Thyroid gland (tissue), 4 donors: ENCODE measurements at regions of chr12 and their contacts with region 1.

Region 1: DNA sequence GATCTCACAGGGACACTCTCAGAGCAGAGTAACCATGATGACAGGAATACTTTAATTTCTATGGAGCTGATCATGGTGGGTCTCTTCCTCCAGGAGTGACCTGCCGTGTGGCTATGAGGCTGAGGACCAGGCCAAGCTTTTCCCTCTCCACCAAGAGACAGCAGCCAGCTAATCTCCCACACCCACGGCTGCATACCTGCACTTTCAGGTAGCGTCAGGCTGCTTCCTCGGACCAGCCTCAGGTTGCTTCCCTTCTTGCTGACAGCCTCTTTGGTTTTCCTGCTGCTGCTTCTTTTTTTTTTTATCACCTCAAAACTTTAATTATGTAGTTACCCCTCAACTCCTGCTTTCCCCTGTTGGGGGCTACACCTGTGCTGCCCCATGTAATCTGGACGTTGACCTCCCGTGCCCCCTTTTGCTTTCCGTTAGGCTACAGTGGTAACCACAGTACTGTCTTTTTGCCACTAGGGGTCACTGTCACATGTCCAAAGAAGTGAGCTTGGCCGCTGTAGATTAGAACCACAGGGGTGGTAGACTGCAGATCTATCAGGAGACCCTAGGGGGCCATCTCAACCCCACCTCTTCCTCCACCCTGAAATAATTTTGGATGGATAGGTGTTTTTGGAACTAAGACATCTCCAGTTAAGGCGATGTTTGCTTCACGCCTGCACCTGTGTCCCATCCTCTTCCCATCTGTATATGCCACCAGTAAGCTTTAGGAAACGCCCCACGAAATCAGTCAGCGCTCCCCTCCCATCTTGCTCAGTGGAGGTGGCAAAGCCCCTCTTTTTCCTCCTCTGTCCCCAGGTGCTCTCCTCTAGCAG is 7.8 kb upstream of the PIP4K2C start:
- DNase-seq: peak; percentile 58 to 60
- H3K4me3 ChIP-seq: no peak overlapping the region
- H3K27ac ChIP-seq: no peak overlapping the region
- H3K4me1 ChIP-seq: no peaks in the 10 kb centered on the region
- H3K27me3 ChIP-seq: no peaks in the 10 kb centered on the region
- CTCF ChIP-seq: peak; percentile 78 to 96 (median 93)
- POLR2A ChIP-seq: no peak

Region 2: DNA sequence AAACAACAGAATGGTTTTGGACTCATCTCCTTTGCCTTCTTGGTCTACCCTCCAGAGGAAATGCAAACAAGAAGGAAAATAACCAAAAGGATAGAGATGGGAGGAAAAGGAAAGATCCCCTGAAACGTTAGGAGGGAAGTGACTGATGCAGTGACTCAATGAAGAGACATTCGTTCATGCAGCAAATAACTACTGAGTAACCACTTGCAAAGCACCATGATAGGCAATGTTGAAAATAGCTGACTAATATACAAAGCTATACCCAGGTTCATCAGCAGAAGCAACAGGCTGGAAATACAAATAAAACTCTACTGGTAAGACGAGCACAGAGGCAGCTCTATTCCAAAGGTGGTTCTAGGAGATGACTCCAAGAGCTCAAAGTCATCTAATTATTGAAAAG is 194.2 kb before region 1 on chr12:
- intact Hi-C with region 1: no loop called
- DNase-seq: no peak
- H3K4me3 ChIP-seq: no peak overlapping the region
- H3K27ac ChIP-seq: no peak overlapping the region
- H3K4me1 ChIP-seq: peaks cover 3 to 7% of the 10 kb centered on the region in 2 donors
- H3K27me3 ChIP-seq: no peaks in the 10 kb centered on the region
- CTCF ChIP-seq: no peak
- POLR2A ChIP-seq: no peak

Region 3: DNA sequence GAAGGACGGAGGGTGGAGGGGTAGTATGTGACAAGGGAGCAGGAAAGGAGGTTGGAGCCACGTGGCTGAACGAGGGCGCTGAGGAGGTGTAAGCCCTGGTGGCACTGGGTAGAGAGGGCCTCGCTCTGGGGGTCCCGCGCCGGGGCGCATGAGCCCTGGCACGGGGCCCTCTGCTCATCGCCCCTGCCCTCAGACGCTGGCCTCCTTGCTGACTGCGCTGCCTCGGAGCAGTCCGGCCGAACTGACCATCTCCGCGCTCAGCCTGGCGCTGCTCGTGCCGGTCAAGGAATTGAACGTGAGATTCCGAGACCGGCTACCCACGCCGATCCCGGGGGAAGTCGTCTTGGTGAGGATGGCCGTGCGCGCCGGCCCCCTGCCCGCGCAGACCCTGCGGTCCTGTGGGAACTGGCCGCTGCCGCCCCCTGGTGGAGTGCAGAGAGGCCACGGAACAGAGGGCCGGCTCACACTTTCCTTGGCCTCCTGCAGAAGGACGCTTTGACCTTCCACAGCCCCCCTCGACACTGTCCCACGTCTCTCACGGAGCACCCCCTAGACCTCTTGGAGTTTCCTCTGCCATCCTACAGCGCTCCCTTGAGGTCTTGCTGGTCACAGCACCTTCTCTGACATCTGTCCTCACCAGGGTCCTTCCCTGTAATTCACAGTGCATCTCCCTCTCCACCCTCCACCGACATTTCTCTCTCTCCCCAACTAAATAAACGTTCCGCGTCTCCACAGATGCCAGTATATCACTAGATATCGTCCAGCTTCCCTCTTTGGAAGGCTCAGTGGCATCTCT is 38.5 kb after region 1 on chr12:
- intact Hi-C with region 1: loop called (anchors 5 kb)
- DNase-seq: peak; percentile 59
- H3K4me3 ChIP-seq: peak overlapping the region in 1 of 3 donors; percentile 1
- H3K27ac ChIP-seq: no peak overlapping the region
- H3K4me1 ChIP-seq: peaks cover 6 to 20% of the 10 kb centered on the region in 2 donors
- H3K27me3 ChIP-seq: peaks cover 31% of the 10 kb centered on the region
- CTCF ChIP-seq: peak; percentile 74 to 91 (median 85)
- POLR2A ChIP-seq: no peak

Region 4: DNA sequence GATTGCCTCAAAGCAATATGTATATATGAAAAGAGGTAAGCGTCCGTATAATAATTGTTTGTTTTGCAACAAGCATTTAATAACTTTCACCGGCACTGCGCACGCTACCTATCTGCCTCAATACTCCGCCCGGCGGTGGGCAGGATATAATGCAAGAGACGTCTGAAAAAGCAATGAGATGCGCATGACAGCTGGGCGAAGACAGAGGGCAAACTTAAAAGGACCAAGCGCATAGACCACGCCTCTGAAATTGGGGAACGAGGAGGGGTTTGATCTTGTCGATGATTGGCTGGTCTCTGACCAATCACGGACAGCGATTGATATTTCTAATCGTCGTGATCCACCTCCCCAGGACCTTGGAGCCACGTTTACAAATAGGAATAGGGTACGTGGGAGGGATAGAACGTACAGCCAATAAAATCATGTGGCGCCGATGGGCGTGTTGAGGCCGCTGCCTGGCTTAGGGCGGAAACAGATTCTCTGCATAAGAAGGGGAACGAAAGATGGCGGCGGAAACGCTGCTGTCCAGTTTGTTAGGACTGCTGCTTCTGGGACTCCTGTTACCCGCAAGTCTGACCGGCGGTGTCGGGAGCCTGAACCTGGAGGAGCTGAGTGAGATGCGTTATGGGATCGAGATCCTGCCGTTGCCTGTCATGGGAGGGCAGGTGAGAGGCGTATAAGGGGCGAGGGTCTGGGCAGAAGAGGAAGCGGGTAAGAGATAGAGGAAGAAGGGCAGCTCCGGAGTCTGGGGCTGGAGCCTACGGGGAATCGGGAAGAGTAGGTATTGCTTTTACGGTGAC is 110.6 kb after region 1 on chr12 and contains the start of gene OS9:
- intact Hi-C with region 1: loop called (anchors 10 kb)
- DNase-seq: peak; percentile 98 to 99
- H3K4me3 ChIP-seq: peak within 1 kb of the TSS; percentile 62 to 100 (median 95)
- H3K27ac ChIP-seq: peak within 1 kb of the TSS in 2 of 3 donors; percentile 13 to 56
- H3K4me1 ChIP-seq: peaks cover 7% of the 10 kb centered on the region in 2 donors
- H3K27me3 ChIP-seq: no peaks in the 10 kb centered on the region
- CTCF ChIP-seq: peak; percentile 34 to 94 (median 81)
- POLR2A ChIP-seq: peak in 1 of 2 donors; percentile 83
- total RNA-seq, gene OS9: 262 to 393 (median 286) TPM